SK-N-SH (cell line): ENCODE measurements at regions of chr3 and their contacts with region 1.

Region 1: DNA sequence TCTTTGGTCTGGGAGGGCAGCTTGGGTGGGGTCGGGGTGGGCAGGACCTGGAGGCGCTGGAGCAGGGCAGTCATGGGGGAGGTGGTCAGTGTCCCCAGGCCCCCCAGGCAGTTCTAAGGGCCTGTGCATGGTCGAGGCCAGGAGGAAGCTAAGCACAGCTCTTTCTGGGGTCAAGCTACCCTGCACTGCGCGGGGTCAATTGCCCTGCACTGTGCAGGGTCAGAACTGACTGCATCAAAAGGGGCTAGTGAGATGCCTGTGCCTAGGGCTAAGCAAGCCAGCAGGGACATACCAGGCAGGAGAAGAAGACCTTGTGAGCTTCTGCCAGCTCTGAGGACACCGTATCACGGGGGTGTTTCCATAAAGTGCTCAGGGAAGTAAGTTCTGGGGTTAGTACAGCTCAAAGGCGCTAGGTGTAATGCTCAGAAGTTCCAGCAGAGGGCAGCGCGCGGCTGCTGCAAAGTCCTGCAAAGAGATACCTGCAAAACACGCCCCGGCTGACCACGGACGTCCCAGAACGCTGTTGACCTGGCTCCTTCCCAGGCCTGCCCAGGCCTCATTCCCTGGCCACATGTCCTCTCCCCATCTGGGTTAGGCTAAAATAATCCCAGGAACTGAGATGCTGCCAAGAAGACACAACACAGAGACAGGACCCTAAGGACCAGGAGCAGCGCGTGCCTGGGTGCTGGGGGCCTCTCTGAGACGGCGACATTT is 18.8 kb upstream of the IQSEC1 start:
- DNase-seq: peak; percentile 83
- H3K4me3 ChIP-seq: no peak overlapping the region; a peak in 1 of 4 replicates
- H3K27ac ChIP-seq: no peak overlapping the region
- H3K4me1 ChIP-seq: peaks cover 0 to 16% of the 10 kb centered on the region in 2 experiments; a peak in 1 of 4 replicates
- H3K27me3 ChIP-seq: no peaks in the 10 kb centered on the region
- CTCF ChIP-seq: peak; percentile 86
- EP300 ChIP-seq: no peak
- RAD21 ChIP-seq: peak; percentile 93

Region 2: DNA sequence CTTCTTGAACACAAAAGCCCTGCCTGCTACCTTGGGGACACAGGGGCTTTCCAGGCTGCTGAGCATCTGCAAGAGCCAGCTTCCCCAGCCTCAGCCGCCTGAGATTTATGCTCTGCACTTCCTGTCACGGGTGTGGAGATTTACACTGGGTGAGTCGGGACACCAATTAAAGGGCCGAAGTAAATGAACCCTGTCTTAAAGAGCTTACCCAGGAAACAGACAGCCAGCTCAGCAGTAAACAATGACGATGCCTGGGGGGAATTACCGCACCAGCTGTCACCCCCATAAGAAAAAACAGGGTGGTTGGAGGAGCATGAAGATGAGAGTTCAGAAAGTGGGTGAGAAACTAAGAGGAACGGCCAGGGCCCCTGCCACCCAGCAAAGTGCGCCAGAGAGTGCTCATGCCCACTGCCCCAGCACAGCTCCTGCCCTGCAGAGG is 18.6 kb after region 1 on chr3:
- CTCF ChIA-PET with region 1: interaction called, 18 read pairs
- POLR2A ChIA-PET with region 1: no interaction called
- DNase-seq: no peak
- H3K4me3 ChIP-seq: no peak overlapping the region
- H3K27ac ChIP-seq: no peak overlapping the region
- H3K4me1 ChIP-seq: no peaks in the 10 kb centered on the region; a peak in 1 of 4 replicates
- H3K27me3 ChIP-seq: no peaks in the 10 kb centered on the region
- CTCF ChIP-seq: no peak
- EP300 ChIP-seq: no peak
- RAD21 ChIP-seq: no peak

Region 3: GRCh38 chr3:13245615-13245978 is 153.5 kb after region 1 on chr3:
- CTCF ChIA-PET with region 1: interaction called, 10 read pairs
- POLR2A ChIA-PET with region 1: no interaction called
- DNase-seq: no peak
- H3K4me3 ChIP-seq: no peak overlapping the region
- H3K27ac ChIP-seq: no peak overlapping the region
- H3K4me1 ChIP-seq: peaks cover 0 to 35% of the 10 kb centered on the region in 2 experiments; a peak in 2 of 4 replicates
- H3K27me3 ChIP-seq: no peaks in the 10 kb centered on the region
- CTCF ChIP-seq: no peak
- EP300 ChIP-seq: no peak
- RAD21 ChIP-seq: no peak

Region 4: GRCh38 chr3:13353936-13354542 is 262.0 kb after region 1 on chr3:
- CTCF ChIA-PET with region 1: interaction called, 12 read pairs
- POLR2A ChIA-PET with region 1: no interaction called
- DNase-seq: peak; percentile 36
- H3K4me3 ChIP-seq: no peak overlapping the region
- H3K27ac ChIP-seq: no peak overlapping the region
- H3K4me1 ChIP-seq: no peaks in the 10 kb centered on the region
- H3K27me3 ChIP-seq: no peaks in the 10 kb centered on the region
- CTCF ChIP-seq: peak; percentile 44; the same call in 1 of the 2 replicates
- EP300 ChIP-seq: no peak
- RAD21 ChIP-seq: no peak

Region 5: GRCh38 chr3:13461169-13462158 is 369.4 kb after region 1 on chr3:
- CTCF ChIA-PET with region 1: interaction called, 20 read pairs
- POLR2A ChIA-PET with region 1: no interaction called
- DNase-seq: peak; percentile 72
- H3K4me3 ChIP-seq: peak overlapping the region in 1 of 2 experiments; percentile 46; a peak in 1 of 4 replicates
- H3K27ac ChIP-seq: no peak overlapping the region
- H3K4me1 ChIP-seq: no peaks in the 10 kb centered on the region
- H3K27me3 ChIP-seq: peaks cover 16% of the 10 kb centered on the region; the same call in 1 of the 2 replicates
- CTCF ChIP-seq: peak; percentile 61
- EP300 ChIP-seq: no peak
- RAD21 ChIP-seq: peak; percentile 43

Region 6: GRCh38 chr3:13850158-13850945 is 758.3 kb after region 1 on chr3:
- CTCF ChIA-PET with region 1: no interaction called
- POLR2A ChIA-PET with region 1: no interaction called
- DNase-seq: no peak
- H3K4me3 ChIP-seq: no peak overlapping the region
- H3K27ac ChIP-seq: no peak overlapping the region
- H3K4me1 ChIP-seq: no peaks in the 10 kb centered on the region; a peak in 1 of 4 replicates
- H3K27me3 ChIP-seq: no peaks in the 10 kb centered on the region
- CTCF ChIP-seq: no peak
- EP300 ChIP-seq: no peak
- RAD21 ChIP-seq: no peak